ENCODE measurements at regions of chr6 and their contacts with region 1.

Region 1: GRCh38 chr6:109187399-109188114 is 92.2 kb downstream of the CEP57L1 start:
- DNase-seq: peak; percentile 35 to 79 (median 57)
- ATAC-seq: peak; percentile 93
- H3K4me3 ChIP-seq: no peak overlapping the region
- H3K4me3 Mint-ChIP-seq: no peak overlapping the region
- H3K27ac ChIP-seq: no peak overlapping the region
- H3K27ac Mint-ChIP-seq: no peak overlapping the region
- H3K4me1 ChIP-seq: no peaks in the 10 kb centered on the region
- H3K4me1 Mint-ChIP-seq: no peaks in the 10 kb centered on the region
- H3K27me3 ChIP-seq: peaks cover 0 to 15% of the 10 kb centered on the region in 2 experiments
- H3K27me3 Mint-ChIP-seq: peaks cover 22% of the 10 kb centered on the region
- CTCF ChIP-seq: peak; percentile 95

Region 2: GRCh38 chr6:109153752-109154151 is 33.8 kb before region 1 on chr6:
- CTCF ChIA-PET with region 1: no interaction called
- POLR2A ChIA-PET with region 1: no interaction called
- intact Hi-C with region 1: no loop called
- DNase-seq: no peak
- ATAC-seq: no peak
- H3K4me3 ChIP-seq: no peak overlapping the region
- H3K4me3 Mint-ChIP-seq: no peak overlapping the region
- H3K27ac ChIP-seq: no peak overlapping the region
- H3K27ac Mint-ChIP-seq: no peak overlapping the region
- H3K4me1 ChIP-seq: no peaks in the 10 kb centered on the region
- H3K4me1 Mint-ChIP-seq: no peaks in the 10 kb centered on the region
- H3K27me3 ChIP-seq: no peaks in the 10 kb centered on the region
- H3K27me3 Mint-ChIP-seq: no peaks in the 10 kb centered on the region
- CTCF ChIP-seq: no peak

Region 3: GRCh38 chr6:109440331-109441068 is 252.9 kb after region 1 on chr6 and contains the starts of genes PPIL6 and SMPD2:
- CTCF ChIA-PET with region 1: interaction called, 7 read pairs
- POLR2A ChIA-PET with region 1: no interaction called
- intact Hi-C with region 1: loop called (anchors 5 kb)
- DNase-seq: peak; percentile 54 to 92 (median 73)
- ATAC-seq: peak; percentile 75
- H3K4me3 ChIP-seq: peak within 1 kb of the TSS; percentile 81
- H3K4me3 Mint-ChIP-seq: peak within 1 kb of the TSS; percentile 95
- H3K27ac ChIP-seq: peak within 1 kb of the TSS; percentile 74 to 82
- H3K27ac Mint-ChIP-seq: peak within 1 kb of the TSS; percentile 93
- H3K4me1 ChIP-seq: peaks cover 39% of the 10 kb centered on the region
- H3K4me1 Mint-ChIP-seq: peaks cover 27% of the 10 kb centered on the region
- H3K27me3 ChIP-seq: no peaks in the 10 kb centered on the region
- H3K27me3 Mint-ChIP-seq: no peaks in the 10 kb centered on the region
- CTCF ChIP-seq: peak; percentile 4
- total RNA-seq, gene PPIL6: 0.84 to 1.3 TPM
- total RNA-seq, gene SMPD2: 25.7 to 27.3 TPM

Region 4: DNA sequence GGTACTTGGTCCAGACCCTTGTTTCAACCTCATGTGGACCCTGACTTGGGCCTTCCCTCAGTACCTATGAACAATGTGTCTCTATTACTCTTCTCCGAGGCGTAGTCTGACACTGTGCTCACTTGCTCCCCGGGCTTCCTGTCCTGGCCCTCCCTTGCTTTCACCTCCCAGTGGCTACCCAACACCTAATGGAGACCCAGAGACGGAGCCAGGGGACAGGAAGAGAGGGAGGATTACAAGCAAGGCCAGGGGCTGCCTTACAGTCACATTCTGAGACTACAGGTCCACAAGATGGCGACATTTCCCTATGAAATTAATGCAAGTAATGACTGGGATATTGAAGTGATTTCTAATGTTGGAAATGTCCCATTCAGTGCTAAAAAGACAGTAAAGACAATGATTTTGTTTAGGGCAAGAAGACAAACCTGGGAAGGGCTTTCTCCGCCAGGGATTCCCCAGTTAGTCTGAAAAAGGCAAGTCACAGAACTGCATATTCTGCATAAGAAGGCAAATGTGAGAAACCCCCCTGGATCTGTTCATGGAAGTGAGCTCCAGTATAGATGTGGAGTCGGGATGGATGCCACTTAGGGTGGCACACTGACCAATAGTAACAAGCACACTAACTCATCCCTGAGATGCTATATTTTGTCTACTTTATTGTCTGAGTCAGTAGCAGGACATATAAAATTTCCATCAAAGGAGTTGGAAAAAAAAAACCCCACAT is 339.5 kb after region 1 on chr6:
- CTCF ChIA-PET with region 1: no interaction called
- POLR2A ChIA-PET with region 1: no interaction called
- intact Hi-C with region 1: loop called in 1 of 2 experiments (anchors 5 kb)
- DNase-seq: peak in 13 of 14 experiments; percentile 9 to 78 (median 32)
- ATAC-seq: peak; percentile 61
- H3K4me3 ChIP-seq: no peak overlapping the region
- H3K4me3 Mint-ChIP-seq: no peak overlapping the region
- H3K27ac ChIP-seq: no peak overlapping the region
- H3K27ac Mint-ChIP-seq: no peak overlapping the region
- H3K4me1 ChIP-seq: peaks cover 4% of the 10 kb centered on the region
- H3K4me1 Mint-ChIP-seq: no peaks in the 10 kb centered on the region
- H3K27me3 ChIP-seq: no peaks in the 10 kb centered on the region
- H3K27me3 Mint-ChIP-seq: no peaks in the 10 kb centered on the region
- CTCF ChIP-seq: peak; percentile 75

Region 5: GRCh38 chr6:110039364-110039980 is 851.9 kb after region 1 on chr6:
- CTCF ChIA-PET with region 1: interaction called, 11 read pairs
- POLR2A ChIA-PET with region 1: interaction called, 4 read pairs
- intact Hi-C with region 1: loop called (anchors 1 to 5 kb)
- DNase-seq: peak; percentile 66 to 89 (median 76)
- ATAC-seq: peak; percentile 80
- H3K4me3 ChIP-seq: peak overlapping the region; percentile 47
- H3K4me3 Mint-ChIP-seq: peak overlapping the region; percentile 90
- H3K27ac ChIP-seq: peak overlapping the region; percentile 39 to 44
- H3K27ac Mint-ChIP-seq: peak overlapping the region; percentile 87
- H3K4me1 ChIP-seq: peaks cover 11% of the 10 kb centered on the region
- H3K4me1 Mint-ChIP-seq: peaks cover 13% of the 10 kb centered on the region
- H3K27me3 ChIP-seq: no peaks in the 10 kb centered on the region
- H3K27me3 Mint-ChIP-seq: no peaks in the 10 kb centered on the region
- CTCF ChIP-seq: peak; percentile 89

Region 6: DNA sequence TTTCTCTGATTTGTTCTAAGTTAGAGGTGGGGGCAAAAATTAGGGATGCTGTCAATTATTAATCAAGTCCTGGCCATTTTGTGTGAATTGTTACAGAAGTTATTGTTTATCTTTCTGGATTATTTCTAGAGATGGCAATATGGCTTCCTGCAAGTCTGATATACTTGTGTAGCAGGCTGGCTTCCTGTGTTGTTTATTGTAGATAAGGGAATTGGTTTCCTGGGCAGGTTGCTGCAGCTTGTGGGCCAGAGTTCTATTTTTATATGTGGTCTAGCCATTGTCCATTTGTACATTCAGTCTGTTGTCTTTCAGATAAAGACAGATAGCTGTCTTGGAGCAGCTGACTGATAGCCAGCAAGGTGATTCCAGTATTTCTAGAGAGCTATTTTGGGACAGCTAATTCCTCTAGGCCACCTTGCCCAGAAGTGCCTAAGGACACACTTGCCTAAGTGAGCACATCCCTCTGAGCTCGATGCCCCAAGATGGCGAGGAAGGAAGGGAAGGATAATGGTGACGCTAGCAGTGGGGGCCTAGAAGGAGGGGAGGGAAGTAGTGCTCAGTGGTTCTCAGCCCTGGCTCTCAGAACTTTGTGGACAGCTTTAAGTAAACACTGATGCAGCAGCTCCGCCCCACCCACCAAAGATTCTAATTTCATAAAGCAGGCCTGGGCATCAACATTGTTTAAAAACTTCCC is 1202.3 kb after region 1 on chr6:
- CTCF ChIA-PET with region 1: interaction called, 4 read pairs
- POLR2A ChIA-PET with region 1: no interaction called
- intact Hi-C with region 1: loop called in 1 of 2 experiments (anchors 10 kb)
- DNase-seq: no peak
- ATAC-seq: peak; percentile 23
- H3K4me3 ChIP-seq: no peak overlapping the region
- H3K4me3 Mint-ChIP-seq: no peak overlapping the region
- H3K27ac ChIP-seq: no peak overlapping the region
- H3K27ac Mint-ChIP-seq: peak overlapping the region; percentile 75
- H3K4me1 ChIP-seq: peaks cover 5% of the 10 kb centered on the region
- H3K4me1 Mint-ChIP-seq: peaks cover 27% of the 10 kb centered on the region
- H3K27me3 ChIP-seq: no peaks in the 10 kb centered on the region
- H3K27me3 Mint-ChIP-seq: no peaks in the 10 kb centered on the region
- CTCF ChIP-seq: no peak

Measured in CD4-positive, alpha-beta T cell (primary cell).